Caco-2 (cell line): ENCODE measurements at regions of chr20 and their contacts with region 1.

Region 1: DNA sequence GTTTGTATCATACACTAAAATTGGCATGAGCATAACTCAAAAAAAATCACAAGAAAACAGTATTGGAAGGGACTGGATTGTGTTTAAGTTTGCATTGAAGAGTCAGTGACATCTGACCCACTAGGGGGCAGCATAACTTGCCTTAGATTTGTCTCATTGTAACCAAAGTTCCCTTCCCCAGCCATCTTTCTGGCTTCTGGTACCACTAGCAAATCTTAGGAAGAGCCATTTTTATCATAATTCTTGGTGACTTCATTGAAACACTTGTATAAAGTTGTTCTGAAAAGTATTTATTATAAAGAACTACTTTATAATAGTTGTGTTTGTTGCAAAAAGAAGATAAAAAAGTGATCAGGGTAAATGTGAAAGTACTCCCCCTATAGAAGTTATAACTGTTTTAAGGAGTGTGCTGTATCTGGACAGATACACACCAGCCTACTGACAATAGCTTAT is 7.7 kb downstream of the CSTF1 start:
- DNase-seq: peak; percentile 66 to 81
- H3K4me3 ChIP-seq: no peak overlapping the region
- H3K4me3 Mint-ChIP-seq: no peak overlapping the region
- H3K27ac Mint-ChIP-seq: no peak overlapping the region
- H3K4me1 ChIP-seq: peaks cover 6% of the 10 kb centered on the region
- H3K4me1 Mint-ChIP-seq: peaks cover 5% of the 10 kb centered on the region
- H3K27me3 ChIP-seq: no peaks in the 10 kb centered on the region
- H3K27me3 Mint-ChIP-seq: no peaks in the 10 kb centered on the region
- CTCF ChIP-seq: peak; percentile 96

Region 2: GRCh38 chr20:56171087-56172012 is 228.8 kb before region 1 on chr20:
- CTCF ChIA-PET with region 1: no interaction called
- POLR2A ChIA-PET with region 1: no interaction called
- intact Hi-C with region 1: no loop called
- DNase-seq: peak in 1 of 2 experiments; percentile 24
- H3K4me3 ChIP-seq: no peak overlapping the region
- H3K4me3 Mint-ChIP-seq: no peak overlapping the region
- H3K27ac Mint-ChIP-seq: no peak overlapping the region
- H3K4me1 ChIP-seq: no peaks in the 10 kb centered on the region
- H3K4me1 Mint-ChIP-seq: no peaks in the 10 kb centered on the region
- H3K27me3 ChIP-seq: 0 out of 2 replicates have a peak, but pooled peaks cover 2% of the 10 kb centered on the region
- H3K27me3 Mint-ChIP-seq: peaks cover 10% of the 10 kb centered on the region
- CTCF ChIP-seq: peak; percentile 47 to 58

Region 3: DNA sequence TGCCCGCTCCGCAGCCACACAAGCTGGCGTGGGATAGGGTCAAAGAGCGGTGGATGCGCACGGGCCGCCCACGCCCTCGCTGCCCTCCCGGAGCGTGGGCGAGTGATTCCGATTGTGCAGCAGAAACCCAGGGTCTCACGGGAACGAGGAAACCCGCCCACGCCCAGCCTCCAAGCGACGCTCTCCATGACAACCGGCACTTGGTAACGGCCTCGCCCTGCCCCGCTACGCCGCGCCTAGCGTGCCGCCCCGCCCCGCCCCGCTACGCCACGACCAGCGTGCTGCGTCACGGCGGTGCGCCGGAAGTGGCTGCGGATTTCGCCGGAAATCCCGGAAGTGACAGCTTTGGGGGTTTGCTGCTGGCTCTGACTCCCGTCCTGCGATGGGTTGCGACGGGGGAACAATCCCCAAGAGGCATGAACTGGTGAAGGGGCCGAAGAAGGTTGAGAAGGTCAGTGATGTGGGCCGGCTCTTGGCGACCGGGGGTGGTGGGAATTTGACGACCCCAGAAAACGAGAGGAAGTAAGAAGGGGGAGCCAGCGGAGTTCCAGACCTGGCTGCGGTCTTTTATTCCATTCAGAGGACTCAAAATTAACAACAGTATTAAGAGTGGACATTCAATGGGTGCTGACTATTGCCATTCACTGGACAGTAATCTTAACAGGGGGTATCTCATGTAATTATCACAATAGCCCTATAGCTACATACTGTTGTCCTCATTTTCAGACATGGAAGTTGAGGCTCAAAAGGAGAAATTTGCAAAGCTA is 68.4 kb after region 1 on chr20 and contains the start of gene RTF2:
- CTCF ChIA-PET with region 1: no interaction called
- POLR2A ChIA-PET with region 1: no interaction called
- intact Hi-C with region 1: loop called (anchors 1 kb)
- DNase-seq: peak; percentile 96 to 99
- H3K4me3 ChIP-seq: peak within 1 kb of the TSS; percentile 67
- H3K4me3 Mint-ChIP-seq: peak within 1 kb of the TSS; percentile 100
- H3K27ac Mint-ChIP-seq: peak within 1 kb of the TSS; percentile 100
- H3K4me1 ChIP-seq: no peaks in the 10 kb centered on the region; the same call in 1 of the 2 replicates
- H3K4me1 Mint-ChIP-seq: peaks cover 10% of the 10 kb centered on the region
- H3K27me3 ChIP-seq: no peaks in the 10 kb centered on the region
- H3K27me3 Mint-ChIP-seq: peaks cover 3% of the 10 kb centered on the region
- CTCF ChIP-seq: no peak
- total RNA-seq, gene RTF2: 146 and 157 TPM in 2 replicates

Region 4: DNA sequence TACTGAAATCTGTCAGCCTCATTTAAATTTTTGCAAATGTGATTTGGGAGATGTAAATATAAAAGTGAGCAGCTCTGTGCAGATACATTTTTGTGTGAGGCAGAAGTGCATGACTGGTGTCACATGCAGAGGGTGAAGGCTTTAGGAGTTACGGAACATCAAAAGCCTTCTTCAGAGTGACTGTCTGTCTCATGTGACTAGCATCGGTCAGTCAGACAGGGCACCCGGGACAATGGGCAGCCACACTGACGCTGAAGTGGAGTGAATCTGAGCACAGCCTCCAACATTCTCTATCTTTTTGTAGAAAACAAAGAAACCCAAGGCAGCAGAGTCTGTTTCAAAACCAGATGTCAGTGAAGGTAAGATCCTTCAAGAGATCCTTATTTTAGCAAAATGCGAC is 116.5 kb after region 1 on chr20:
- CTCF ChIA-PET with region 1: no interaction called
- POLR2A ChIA-PET with region 1: no interaction called
- intact Hi-C with region 1: loop called (anchors 1 kb)
- DNase-seq: no peak
- H3K4me3 ChIP-seq: no peak overlapping the region
- H3K4me3 Mint-ChIP-seq: no peak overlapping the region
- H3K27ac Mint-ChIP-seq: no peak overlapping the region
- H3K4me1 ChIP-seq: no peaks in the 10 kb centered on the region
- H3K4me1 Mint-ChIP-seq: no peaks in the 10 kb centered on the region
- H3K27me3 ChIP-seq: no peaks in the 10 kb centered on the region
- H3K27me3 Mint-ChIP-seq: no peaks in the 10 kb centered on the region
- CTCF ChIP-seq: no peak